Left ventricle myocardium superior (tissue), 1 donor: ENCODE measurements at regions of chr7 and their contacts with region 1.

Region 1: DNA sequence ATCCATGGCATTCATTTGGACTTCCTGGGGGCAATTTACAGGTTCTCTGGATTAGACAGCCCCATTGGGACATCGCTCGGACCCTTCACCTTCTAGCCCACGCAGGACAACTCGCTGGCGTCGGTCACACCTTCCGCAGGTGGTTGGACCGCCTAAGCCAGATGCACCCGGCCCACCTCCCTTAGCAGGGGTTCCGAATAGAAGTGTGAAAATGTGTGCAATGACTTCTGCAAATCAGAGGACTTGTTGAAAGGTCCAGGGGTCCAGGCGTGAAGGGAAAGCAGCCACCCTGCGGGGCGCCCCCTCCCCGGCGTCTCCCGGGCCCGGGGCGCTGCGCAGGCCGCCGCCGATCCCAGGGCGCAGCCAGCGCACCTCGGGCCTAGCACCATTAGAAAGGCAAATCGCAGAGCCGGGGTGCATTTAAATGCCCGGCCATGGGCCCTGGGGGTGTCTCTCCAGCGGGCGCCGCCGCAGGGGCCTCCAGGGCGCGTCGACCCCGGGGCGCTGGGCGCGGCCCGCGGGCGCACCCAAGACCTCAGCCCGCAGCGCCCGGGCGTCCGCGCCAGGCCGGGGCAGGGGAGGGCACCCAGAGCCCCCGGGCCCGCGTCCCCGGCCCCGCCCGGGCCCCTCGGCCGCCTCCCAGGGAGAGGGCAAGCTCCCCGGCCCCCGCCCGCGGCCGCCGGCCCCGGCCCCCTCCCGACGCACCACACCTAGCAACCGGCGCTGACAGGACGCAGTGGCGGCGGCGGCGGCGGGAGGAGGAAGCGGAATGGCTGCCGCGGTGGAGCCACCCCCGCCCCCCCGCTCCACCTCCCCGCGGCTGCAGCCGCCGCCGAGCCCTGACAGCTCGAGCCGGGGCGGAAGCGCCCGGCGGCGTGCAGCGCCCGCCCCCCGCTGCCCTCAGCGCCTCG is 1.2 kb downstream of the JAZF1 start:
- DNase-seq: peak; percentile 87
- ATAC-seq: peak; percentile 70

Region 2: DNA sequence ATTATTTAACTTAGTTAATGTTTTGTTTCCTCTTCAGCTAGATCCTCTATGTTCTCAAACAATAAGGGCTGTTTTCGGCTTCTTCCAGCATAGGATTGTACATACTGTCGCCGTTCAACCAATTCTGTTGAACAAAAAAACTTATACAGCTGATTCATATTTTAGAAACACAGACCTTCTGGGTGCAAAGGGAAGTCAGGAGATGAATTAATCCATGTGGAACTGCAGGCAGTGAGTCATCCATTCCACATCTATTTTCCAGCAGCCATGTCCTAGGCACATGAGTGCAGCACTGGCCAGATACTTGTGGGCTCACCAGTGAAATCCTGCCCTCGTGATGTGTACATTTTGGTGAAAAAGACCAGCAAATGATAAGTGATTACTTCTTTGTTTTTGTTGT is 162.0 kb before region 1 on chr7:
- intact Hi-C with region 1: no loop called
- DNase-seq: no peak
- ATAC-seq: no peak

Region 3: GRCh38 chr7:28102778-28103177 is 76.6 kb before region 1 on chr7:
- intact Hi-C with region 1: loop called (anchors 10 kb)
- DNase-seq: no peak
- ATAC-seq: peak; percentile 49

Region 4: DNA sequence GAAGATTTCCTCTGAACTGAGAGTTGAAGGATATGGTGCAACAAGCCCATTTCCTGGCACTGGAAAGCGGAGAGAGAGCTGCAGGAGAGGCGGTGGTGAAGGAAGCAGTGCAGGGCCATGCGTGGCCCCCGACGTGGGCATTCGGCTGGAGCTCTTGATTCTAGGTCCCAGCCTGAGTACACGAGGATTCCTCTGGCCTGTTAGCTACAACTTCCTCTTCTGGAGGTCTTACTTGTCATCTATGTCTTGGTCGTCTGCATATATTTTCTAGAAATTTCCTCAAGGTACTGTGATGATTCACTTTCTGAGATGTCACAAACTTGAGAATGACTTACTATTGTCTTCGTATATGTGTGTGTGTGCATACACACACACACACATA is 60.4 kb after region 1 on chr7:
- intact Hi-C with region 1: no loop called
- DNase-seq: no peak
- ATAC-seq: no peak

Region 5: DNA sequence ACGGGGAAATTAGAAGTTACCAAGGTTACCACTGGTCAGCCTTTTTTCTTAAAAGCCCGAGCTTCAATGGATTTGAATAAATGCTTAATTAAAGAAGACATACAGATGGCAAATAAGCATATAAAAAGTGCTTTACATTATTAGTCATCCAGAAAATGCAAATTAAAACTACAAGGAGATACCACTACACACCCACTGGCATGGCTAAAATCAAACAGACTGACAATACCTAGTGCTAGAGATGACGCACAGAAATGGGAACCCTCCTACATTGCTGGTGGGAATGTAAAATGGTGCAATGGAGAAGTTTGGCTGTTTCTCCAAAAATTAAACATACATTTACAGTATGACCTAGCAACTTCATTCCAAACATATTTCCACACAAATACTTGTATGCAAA is 194.6 kb after region 1 on chr7:
- intact Hi-C with region 1: no loop called
- DNase-seq: no peak
- ATAC-seq: no peak

Region 6: GRCh38 chr7:28490831-28491230 is 311.5 kb after region 1 on chr7:
- intact Hi-C with region 1: no loop called
- DNase-seq: no peak
- ATAC-seq: no peak